ENCODE measurements at regions of chr12 and their contacts with region 1.

Region 1: DNA sequence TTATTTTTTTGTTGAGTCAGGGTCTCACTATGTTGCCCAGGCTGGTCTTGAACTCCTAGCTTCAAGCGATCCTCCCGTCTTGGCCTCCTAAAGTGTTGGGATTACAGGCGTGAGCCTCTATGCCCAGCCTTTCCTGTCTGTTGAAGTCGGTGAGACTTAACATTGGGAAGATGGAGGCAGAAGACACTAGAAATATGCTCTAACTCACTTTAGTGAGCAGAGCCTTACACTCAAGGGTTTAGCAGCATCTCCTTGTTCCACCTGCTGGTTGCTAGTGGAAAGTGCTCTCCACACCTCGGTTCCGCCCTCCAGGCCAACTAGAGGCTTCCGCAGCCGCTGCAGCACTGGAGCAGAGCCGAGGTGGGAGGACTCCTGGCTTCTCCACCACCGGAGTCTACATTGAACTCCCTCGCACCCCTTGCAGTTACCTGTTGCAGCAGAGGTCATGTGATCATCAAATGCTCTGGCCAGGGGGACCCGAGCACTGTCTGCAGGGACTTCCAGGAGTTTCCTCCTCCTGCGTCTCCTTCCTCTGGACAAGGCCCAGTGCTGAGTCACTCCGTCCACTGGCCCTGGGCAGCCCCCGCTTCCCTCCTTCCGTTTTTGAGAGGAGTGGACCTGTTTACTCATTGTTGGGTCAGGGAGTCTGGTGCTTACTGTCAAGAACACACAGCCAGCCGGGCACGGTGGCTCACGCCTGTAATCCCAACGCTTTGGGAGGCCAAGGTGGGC is 9.4 kb upstream of the HVCN1 start:
- DNase-seq: peak; percentile 75 to 88
- ATAC-seq: peak; percentile 82 to 90 (median 88)
- H3K4me3 ChIP-seq: peak overlapping the region; percentile 46
- H3K27ac ChIP-seq: peak overlapping the region; percentile 16
- H3K4me1 ChIP-seq: peaks cover 13% of the 10 kb centered on the region
- H3K27me3 ChIP-seq: no peaks in the 10 kb centered on the region
- CTCF ChIP-seq: peak; percentile 66

Region 2: GRCh38 chr12:110449799-110450497 is 248.4 kb before region 1 on chr12 and contains the start of gene ARPC3:
- intact Hi-C with region 1: loop called in 1 of 2 experiments (anchors 10 kb)
- DNase-seq: peak; percentile 95 to 97
- ATAC-seq: peak; percentile 99
- H3K4me3 ChIP-seq: peak within 1 kb of the TSS; percentile 88
- H3K27ac ChIP-seq: peak within 1 kb of the TSS; percentile 89
- H3K4me1 ChIP-seq: peaks cover 9% of the 10 kb centered on the region
- H3K27me3 ChIP-seq: no peaks in the 10 kb centered on the region
- CTCF ChIP-seq: peak; percentile 92
- total RNA-seq, gene ARPC3: 52.7 to 71.6 (median 59.7) TPM

Region 3: GRCh38 chr12:110513842-110514241 is 184.5 kb before region 1 on chr12:
- intact Hi-C with region 1: loop called in 1 of 2 experiments (anchors 10 kb)
- DNase-seq: no peak
- ATAC-seq: no peak
- H3K4me3 ChIP-seq: no peak overlapping the region
- H3K27ac ChIP-seq: no peak overlapping the region
- H3K4me1 ChIP-seq: no peaks in the 10 kb centered on the region
- H3K27me3 ChIP-seq: no peaks in the 10 kb centered on the region
- CTCF ChIP-seq: no peak

Region 4: GRCh38 chr12:110796952-110797351 is 98.6 kb after region 1 on chr12:
- intact Hi-C with region 1: no loop called
- DNase-seq: no peak
- ATAC-seq: no peak
- H3K4me3 ChIP-seq: no peak overlapping the region
- H3K27ac ChIP-seq: no peak overlapping the region
- H3K4me1 ChIP-seq: no peaks in the 10 kb centered on the region
- H3K27me3 ChIP-seq: no peaks in the 10 kb centered on the region
- CTCF ChIP-seq: no peak

Measured in psoas muscle (tissue), 8 donors.